ENCODE measurements at regions of chr10 and their contacts with region 1.

Region 1: DNA sequence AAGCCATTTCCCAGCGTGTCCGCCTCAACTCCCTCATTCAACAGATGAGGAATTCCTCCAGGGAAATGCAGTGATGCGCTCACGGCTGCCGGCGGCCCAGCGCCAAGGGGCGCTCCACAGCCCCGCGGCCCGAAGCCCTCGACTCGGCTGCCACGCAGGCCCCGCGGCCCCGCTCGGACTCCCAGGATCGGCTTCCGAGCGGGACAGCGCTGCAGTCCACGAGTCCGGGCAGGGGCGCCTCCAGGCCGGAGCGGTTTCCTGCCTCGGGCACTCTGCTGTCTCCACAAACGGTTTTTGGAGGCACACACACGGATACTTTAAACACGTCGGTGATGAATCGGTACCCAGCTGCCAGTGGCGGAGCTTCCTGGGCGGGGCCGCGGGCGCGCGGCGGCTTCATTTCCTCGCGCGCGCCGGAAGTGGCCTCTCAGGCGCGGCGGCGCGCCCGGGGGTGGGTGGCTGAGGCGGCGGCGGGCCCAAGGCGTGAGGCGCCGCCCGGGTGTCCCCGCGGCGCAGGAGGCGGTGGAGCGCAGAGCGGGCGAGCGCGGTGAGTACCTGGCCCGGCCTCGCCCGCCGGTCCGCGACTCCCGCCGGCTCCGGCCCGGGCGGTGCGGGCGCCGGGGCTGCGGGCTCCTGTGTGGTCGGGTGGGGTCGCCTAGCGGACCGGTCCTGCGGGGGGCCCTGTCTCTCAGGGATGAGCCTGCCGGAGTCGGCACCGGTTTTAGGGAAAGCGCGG is at the start of gene CSGALNACT2:
- DNase-seq: peak; percentile 92
- ATAC-seq: peak; percentile 81
- H3K4me3 Mint-ChIP-seq: peak within 1 kb of the TSS; percentile 95
- H3K27ac Mint-ChIP-seq: peak within 1 kb of the TSS; percentile 96
- H3K4me1 Mint-ChIP-seq: peaks cover 58% of the 10 kb centered on the region
- H3K27me3 Mint-ChIP-seq: no peaks in the 10 kb centered on the region
- CTCF ChIP-seq: no peak
- total RNA-seq, gene CSGALNACT2: 15.2 and 17.4 TPM in 2 replicates

Region 2: GRCh38 chr10:42638055-42638820 is 500.0 kb before region 1 on chr10 and contains the start of gene ZNF33B:
- CTCF ChIA-PET with region 1: no interaction called
- POLR2A ChIA-PET with region 1: interaction called, 5 read pairs
- intact Hi-C with region 1: loop called (anchors 2 kb)
- DNase-seq: peak; percentile 88
- ATAC-seq: peak; percentile 96
- H3K4me3 Mint-ChIP-seq: peak within 1 kb of the TSS; percentile 96
- H3K27ac Mint-ChIP-seq: peak within 1 kb of the TSS; percentile 96
- H3K4me1 Mint-ChIP-seq: peaks cover 46% of the 10 kb centered on the region
- H3K27me3 Mint-ChIP-seq: no peaks in the 10 kb centered on the region
- CTCF ChIP-seq: no peak
- total RNA-seq, gene ZNF33B: 31.0 and 34.0 TPM in 2 replicates

Region 3: GRCh38 chr10:43120929-43121314 is 17.3 kb before region 1 on chr10:
- CTCF ChIA-PET with region 1: interaction called, 6 read pairs
- POLR2A ChIA-PET with region 1: interaction called, 67 read pairs
- intact Hi-C with region 1: loop called (anchors 1 kb)
- DNase-seq: no peak
- ATAC-seq: peak; percentile 98
- H3K4me3 Mint-ChIP-seq: peak overlapping the region; percentile 59
- H3K27ac Mint-ChIP-seq: peak overlapping the region; percentile 88
- H3K4me1 Mint-ChIP-seq: peaks cover 46% of the 10 kb centered on the region
- H3K27me3 Mint-ChIP-seq: no peaks in the 10 kb centered on the region
- CTCF ChIP-seq: no peak

Region 4: DNA sequence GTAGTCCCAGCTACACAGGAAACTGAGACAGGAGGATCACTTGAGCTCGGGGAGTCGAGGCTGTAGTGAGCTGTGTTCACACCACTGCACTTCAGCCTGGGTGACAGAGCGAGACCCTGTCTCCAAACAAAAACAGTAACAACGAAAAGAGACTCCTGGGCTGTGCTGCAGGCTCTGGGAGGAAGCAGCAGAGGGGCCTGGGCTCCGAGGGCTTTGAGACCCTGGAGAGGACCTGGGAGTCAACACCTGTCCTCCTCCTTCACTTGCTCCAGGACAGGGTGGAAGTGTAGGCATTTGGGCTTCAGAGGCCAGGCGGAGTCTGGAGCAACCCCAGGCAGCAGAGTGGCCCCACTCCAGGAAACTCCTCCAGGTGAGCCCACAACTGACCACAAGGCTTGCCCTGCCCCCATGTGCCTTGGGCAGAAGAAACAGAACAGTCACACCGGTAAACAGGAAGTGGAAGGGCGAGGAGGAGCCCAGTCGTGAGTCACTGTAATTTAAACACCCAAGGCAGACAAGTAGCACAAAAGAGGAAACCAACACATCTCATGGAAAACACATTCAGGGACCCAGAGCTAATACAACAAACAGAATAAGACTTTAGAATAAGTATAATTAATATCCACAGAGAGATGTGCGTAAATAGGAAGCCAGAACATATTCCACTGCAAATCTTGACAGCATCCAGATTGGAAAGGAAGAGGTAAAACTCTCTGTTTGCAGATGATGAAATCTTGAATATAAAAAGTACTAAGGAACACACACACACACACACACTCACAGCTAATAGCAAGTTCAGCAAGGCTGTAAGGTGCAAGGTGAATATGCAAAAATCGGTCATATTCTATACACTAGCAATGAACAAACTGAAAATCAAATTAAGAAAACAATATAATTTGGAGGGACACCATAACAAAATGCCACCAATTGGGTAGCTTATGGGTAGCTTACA is 149.1 kb after region 1 on chr10:
- CTCF ChIA-PET with region 1: no interaction called
- POLR2A ChIA-PET with region 1: no interaction called
- intact Hi-C with region 1: loop called (anchors 10 kb)
- DNase-seq: no peak
- ATAC-seq: peak; percentile 31
- H3K4me3 Mint-ChIP-seq: peak overlapping the region; percentile 39
- H3K27ac Mint-ChIP-seq: peak overlapping the region; percentile 10
- H3K4me1 Mint-ChIP-seq: peaks cover 17% of the 10 kb centered on the region
- H3K27me3 Mint-ChIP-seq: peaks cover 3% of the 10 kb centered on the region
- CTCF ChIP-seq: no peak

Region 5: DNA sequence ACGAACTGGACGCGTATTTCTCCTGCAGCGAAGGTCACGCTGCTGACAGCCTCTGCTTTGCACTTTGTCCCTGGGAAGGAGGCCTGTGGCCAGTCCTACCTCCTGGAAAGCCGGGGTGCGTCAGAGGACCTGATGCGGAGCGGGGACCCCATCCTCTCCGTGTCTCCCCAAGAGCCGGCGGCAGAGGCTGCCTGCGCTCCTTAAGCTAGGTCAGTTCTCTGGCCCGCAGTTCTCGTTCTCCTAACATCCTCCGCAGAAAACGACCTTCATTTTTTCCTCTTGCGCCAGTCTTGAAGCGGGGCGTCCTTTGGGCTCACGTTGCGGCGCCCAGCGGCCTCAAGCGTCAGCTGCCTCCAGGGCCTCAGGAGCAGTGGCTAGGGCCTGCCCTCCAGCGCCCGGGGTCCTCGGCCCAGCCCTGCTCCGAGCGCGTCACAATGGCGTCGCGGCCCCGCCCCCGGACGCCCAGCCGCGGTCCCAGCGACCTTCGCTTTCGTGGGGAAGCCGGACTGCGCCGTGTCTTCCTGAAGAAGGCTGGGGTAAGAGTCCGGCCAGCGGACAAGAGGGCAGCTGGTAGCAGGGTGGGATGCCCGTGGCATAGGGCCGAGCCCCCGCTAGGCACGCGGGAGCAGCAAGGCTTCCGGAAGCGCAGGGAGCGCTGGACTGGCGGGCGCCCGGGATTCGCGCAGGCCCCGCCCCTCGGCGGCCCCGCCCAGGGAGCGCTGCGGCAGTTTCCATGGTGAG is 298.4 kb after region 1 on chr10 and contains the start of gene ZNF487:
- CTCF ChIA-PET with region 1: no interaction called
- POLR2A ChIA-PET with region 1: interaction called, 4 read pairs
- intact Hi-C with region 1: loop called (anchors 1 kb)
- DNase-seq: peak; percentile 97
- ATAC-seq: peak; percentile 90
- H3K4me3 Mint-ChIP-seq: peak within 1 kb of the TSS; percentile 91
- H3K27ac Mint-ChIP-seq: peak within 1 kb of the TSS; percentile 95
- H3K4me1 Mint-ChIP-seq: peaks cover 34% of the 10 kb centered on the region
- H3K27me3 Mint-ChIP-seq: no peaks in the 10 kb centered on the region
- CTCF ChIP-seq: no peak
- total RNA-seq, gene ZNF487: 2.9 and 3.4 TPM in 2 replicates

Region 6: DNA sequence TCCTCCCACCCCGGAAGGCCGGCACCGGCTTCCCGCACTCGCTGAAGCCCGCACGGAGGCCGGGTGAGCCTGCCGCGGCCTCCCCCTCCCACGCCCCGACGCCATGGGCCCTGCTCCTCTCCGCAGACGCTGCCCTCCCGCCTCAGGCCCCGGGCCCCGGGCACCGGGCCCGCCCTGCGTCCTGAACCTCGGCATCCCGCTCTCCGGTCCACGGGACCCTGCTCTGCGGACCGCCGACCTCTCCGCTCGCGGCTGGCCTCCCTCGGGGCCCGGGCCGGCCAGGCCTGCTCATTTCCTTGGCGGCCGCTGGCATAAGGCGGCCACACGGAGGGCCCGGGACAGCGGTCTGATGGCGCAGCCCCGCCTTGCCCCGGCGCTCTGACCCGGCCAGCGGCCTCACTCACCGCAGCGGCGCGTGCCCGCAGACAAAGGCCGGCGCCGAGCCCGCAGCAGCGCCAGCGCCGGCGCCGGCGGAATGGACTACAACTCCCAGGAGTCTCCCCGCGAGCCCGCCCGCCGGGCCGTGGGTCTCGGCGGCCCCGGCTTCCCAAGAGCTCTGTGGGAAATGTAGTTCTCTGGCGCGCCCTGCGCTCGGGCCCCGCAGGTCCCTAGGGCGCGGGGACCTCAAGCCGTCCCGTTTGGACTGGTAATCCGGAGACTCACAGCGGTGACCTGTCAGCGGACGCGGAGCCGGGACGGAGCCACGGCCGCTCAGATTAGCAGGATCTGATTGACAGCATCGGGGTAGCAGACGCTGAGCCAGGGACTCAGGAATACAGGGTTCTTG is 510.4 kb after region 1 on chr10 and contains the start of gene ZNF32:
- CTCF ChIA-PET with region 1: no interaction called
- POLR2A ChIA-PET with region 1: interaction called, 3 read pairs
- intact Hi-C with region 1: loop called (anchors 2 kb)
- DNase-seq: peak; percentile 79
- ATAC-seq: peak; percentile 98
- H3K4me3 Mint-ChIP-seq: peak within 1 kb of the TSS; percentile 94
- H3K27ac Mint-ChIP-seq: peak within 1 kb of the TSS; percentile 77
- H3K4me1 Mint-ChIP-seq: peaks cover 20% of the 10 kb centered on the region
- H3K27me3 Mint-ChIP-seq: peaks cover 4% of the 10 kb centered on the region
- CTCF ChIP-seq: no peak
- total RNA-seq, gene ZNF32: 26.7 and 30.1 TPM in 2 replicates